CD4-positive, alpha-beta memory T cell (primary cell): ENCODE measurements at regions of chr5 and their contacts with region 1.

Region 1: DNA sequence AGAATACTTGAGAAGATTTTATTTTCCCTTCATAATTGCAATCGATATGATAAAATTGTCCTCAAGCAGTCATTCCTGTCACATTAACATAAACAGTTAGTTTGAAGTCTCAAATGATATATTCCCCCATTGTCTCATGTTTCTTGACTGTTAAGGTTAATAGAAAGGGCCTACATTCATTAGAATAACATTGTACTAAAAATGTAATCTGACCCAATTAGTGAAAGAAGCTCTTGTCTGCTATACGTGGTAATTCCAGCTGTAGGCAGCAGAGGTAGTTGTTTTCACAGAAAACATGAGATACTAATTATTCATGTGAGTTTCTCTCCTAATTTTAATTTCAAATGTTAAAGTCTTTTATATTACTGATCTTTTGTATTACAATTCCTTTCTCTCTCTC is 25.9 kb upstream of the AP3B1 start:
- DNase-seq: peak in 3 of 5 donors; percentile 6 to 11 (median 6)
- H3K4me3 ChIP-seq: no peak overlapping the region
- H3K4me3 Mint-ChIP-seq: no peak overlapping the region
- H3K27ac ChIP-seq: no peak overlapping the region
- H3K27ac Mint-ChIP-seq: no peak overlapping the region
- H3K4me1 ChIP-seq: no peaks in the 10 kb centered on the region
- H3K4me1 Mint-ChIP-seq: peaks cover 0 to 1% (median 0%) of the 10 kb centered on the region in 4 donors
- H3K27me3 ChIP-seq: no peaks in the 10 kb centered on the region
- H3K27me3 Mint-ChIP-seq: peaks cover 2 to 3% of the 10 kb centered on the region in 2 donors

Region 2: GRCh38 chr5:78260771-78261170 is 59.6 kb before region 1 on chr5:
- CTCF ChIA-PET with region 1: no interaction called
- POLR2A ChIA-PET with region 1: no interaction called
- intact Hi-C with region 1: no loop called
- DNase-seq: no peak
- H3K4me3 ChIP-seq: no peak overlapping the region
- H3K4me3 Mint-ChIP-seq: no peak overlapping the region
- H3K27ac ChIP-seq: no peak overlapping the region
- H3K27ac Mint-ChIP-seq: no peak overlapping the region
- H3K4me1 ChIP-seq: no peaks in the 10 kb centered on the region
- H3K4me1 Mint-ChIP-seq: peaks cover 21 to 36% (median 26%) of the 10 kb centered on the region in 4 donors
- H3K27me3 ChIP-seq: no peaks in the 10 kb centered on the region
- H3K27me3 Mint-ChIP-seq: no peaks in the 10 kb centered on the region

Region 3: DNA sequence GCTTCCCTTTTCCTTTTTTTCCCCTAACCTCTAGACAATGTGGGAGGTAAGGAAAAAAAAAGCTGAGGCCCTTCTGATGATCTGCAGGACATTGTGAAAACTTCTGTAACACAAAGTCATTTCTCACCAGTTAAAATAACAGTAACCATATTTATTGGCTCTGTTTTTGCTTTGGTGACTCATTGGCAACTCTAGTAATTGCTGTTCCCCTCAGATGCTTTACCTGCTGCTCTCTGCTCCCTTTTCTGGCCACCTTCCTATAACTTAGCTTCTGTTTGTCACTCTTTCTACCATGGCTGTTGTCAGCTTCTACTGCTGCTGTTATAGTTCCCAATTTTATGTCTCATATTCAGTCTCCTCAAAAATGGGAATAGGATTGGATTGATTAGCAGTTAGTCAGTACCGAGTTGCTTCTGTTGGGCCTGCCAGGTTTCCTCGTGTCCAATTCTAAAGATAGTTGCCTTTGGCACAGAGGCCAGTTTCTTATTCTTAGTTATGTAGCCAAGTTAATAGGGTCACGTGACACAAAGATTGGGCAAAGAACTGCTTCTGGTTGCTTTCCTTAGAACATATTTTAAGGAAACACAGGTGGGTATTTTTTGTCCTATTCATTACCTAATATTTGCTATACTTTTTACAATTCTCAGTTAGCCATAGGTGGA is 56.8 kb after region 1 on chr5:
- CTCF ChIA-PET with region 1: no interaction called
- POLR2A ChIA-PET with region 1: no interaction called
- intact Hi-C with region 1: no loop called
- DNase-seq: no peak
- H3K4me3 ChIP-seq: no peak overlapping the region
- H3K4me3 Mint-ChIP-seq: no peak overlapping the region
- H3K27ac ChIP-seq: no peak overlapping the region
- H3K27ac Mint-ChIP-seq: peak overlapping the region in 1 of 7 donors; percentile 32
- H3K4me1 ChIP-seq: peaks cover 4% of the 10 kb centered on the region
- H3K4me1 Mint-ChIP-seq: peaks cover 24 to 38% (median 29%) of the 10 kb centered on the region in 4 donors
- H3K27me3 ChIP-seq: no peaks in the 10 kb centered on the region
- H3K27me3 Mint-ChIP-seq: no peaks in the 10 kb centered on the region

Region 4: GRCh38 chr5:78458843-78459242 is 138.4 kb after region 1 on chr5:
- CTCF ChIA-PET with region 1: no interaction called
- POLR2A ChIA-PET with region 1: no interaction called
- intact Hi-C with region 1: no loop called
- DNase-seq: no peak
- H3K4me3 ChIP-seq: no peak overlapping the region
- H3K4me3 Mint-ChIP-seq: no peak overlapping the region
- H3K27ac ChIP-seq: no peak overlapping the region
- H3K27ac Mint-ChIP-seq: no peak overlapping the region
- H3K4me1 ChIP-seq: no peaks in the 10 kb centered on the region
- H3K4me1 Mint-ChIP-seq: peaks cover 9 to 21% (median 19%) of the 10 kb centered on the region in 4 donors
- H3K27me3 ChIP-seq: no peaks in the 10 kb centered on the region
- H3K27me3 Mint-ChIP-seq: no peaks in the 10 kb centered on the region

Region 5: GRCh38 chr5:79464695-79465332 is 1144.4 kb after region 1 on chr5:
- CTCF ChIA-PET with region 1: no interaction called
- POLR2A ChIA-PET with region 1: no interaction called
- intact Hi-C with region 1: loop called (anchors 5 kb)
- DNase-seq: peak in 4 of 5 donors; percentile 14 to 33 (median 20)
- H3K4me3 ChIP-seq: no peak overlapping the region
- H3K4me3 Mint-ChIP-seq: no peak overlapping the region
- H3K27ac ChIP-seq: no peak overlapping the region
- H3K27ac Mint-ChIP-seq: peak overlapping the region in 1 of 7 donors; percentile 1
- H3K4me1 ChIP-seq: no peaks in the 10 kb centered on the region
- H3K4me1 Mint-ChIP-seq: peaks cover 0 to 2% (median 0%) of the 10 kb centered on the region in 4 donors
- H3K27me3 ChIP-seq: no peaks in the 10 kb centered on the region
- H3K27me3 Mint-ChIP-seq: peaks cover 0 to 7% of the 10 kb centered on the region in 2 donors